ENCODE measurements at regions of chr14 and their contacts with region 1.

Region 1: DNA sequence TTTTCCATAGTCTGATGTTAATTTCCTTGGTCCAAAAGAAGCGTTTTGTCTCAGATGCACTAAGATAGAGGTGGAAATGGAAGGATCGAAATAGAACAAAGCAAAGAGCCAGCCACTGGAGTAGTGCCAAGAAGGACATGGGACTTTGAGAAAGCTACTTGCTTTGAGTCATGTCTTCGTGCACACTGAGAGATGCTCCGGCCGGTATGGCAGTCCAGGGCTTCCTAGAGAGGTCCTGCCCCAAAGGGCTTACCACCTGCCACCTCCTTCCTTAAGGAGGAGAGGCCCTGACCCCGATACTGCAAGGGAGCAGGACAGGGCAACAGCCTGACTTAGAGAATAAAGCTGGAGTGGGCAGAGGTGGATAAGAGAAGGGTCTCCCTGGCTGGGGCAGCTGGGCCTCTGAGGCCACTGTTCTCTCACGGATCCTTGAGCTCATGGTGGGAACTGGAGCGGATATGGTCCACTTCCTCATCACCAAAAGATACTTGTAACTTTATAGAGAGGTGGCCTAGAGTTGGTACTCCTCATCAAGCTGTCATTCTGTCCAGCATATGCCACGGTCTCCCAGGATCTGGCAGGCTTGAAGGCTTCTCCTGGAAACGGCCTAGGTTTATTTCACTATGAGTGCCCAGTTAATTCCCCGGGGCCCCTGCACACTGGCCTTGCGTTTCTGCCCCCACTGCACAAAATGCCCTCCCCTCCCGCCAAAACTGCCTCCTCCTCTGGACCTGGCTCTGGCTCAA is 57.4 kb downstream of the FOXN3 start:
- DNase-seq: no peak
- ATAC-seq: peak; percentile 50
- H3K4me3 ChIP-seq: no peak overlapping the region
- H3K27ac ChIP-seq: peak overlapping the region; percentile 31; the same call in 1 of the 2 replicates
- H3K4me1 ChIP-seq: peaks cover 15% of the 10 kb centered on the region
- H3K27me3 ChIP-seq: no peaks in the 10 kb centered on the region
- CTCF ChIP-seq: no peak
- EP300 ChIP-seq: no peak
- POLR2A ChIP-seq: no peak
- RAD21 ChIP-seq: no peak

Region 2: GRCh38 chr14:89336338-89336737 is 23.3 kb before region 1 on chr14:
- CTCF ChIA-PET with region 1: no interaction called
- POLR2A ChIA-PET with region 1: interaction called, 4 read pairs
- RAD21 ChIA-PET with region 1: interaction called, 7 read pairs
- SMC1A ChIA-PET with region 1: interaction called, 22 read pairs
- in situ Hi-C with region 1: no loop called
- intact Hi-C with region 1: no loop called
- DNase-seq: no peak
- ATAC-seq: peak; percentile 62
- H3K4me3 ChIP-seq: no peak overlapping the region
- H3K27ac ChIP-seq: no peak overlapping the region
- H3K4me1 ChIP-seq: peaks cover 59% of the 10 kb centered on the region
- H3K27me3 ChIP-seq: no peaks in the 10 kb centered on the region
- CTCF ChIP-seq: peak; percentile 8 to 35 (median 21); a peak in 4 of 6 replicates
- EP300 ChIP-seq: no peak
- POLR2A ChIP-seq: no peak
- RAD21 ChIP-seq: peak; percentile 69

Region 3: GRCh38 chr14:89707086-89707485 is 347.4 kb after region 1 on chr14:
- CTCF ChIA-PET with region 1: no interaction called
- POLR2A ChIA-PET with region 1: no interaction called
- RAD21 ChIA-PET with region 1: no interaction called
- SMC1A ChIA-PET with region 1: no interaction called
- in situ Hi-C with region 1: no loop called
- intact Hi-C with region 1: no loop called
- DNase-seq: no peak
- ATAC-seq: no peak
- H3K4me3 ChIP-seq: no peak overlapping the region
- H3K27ac ChIP-seq: no peak overlapping the region
- H3K4me1 ChIP-seq: no peaks in the 10 kb centered on the region; the same call in 1 of the 2 replicates
- H3K27me3 ChIP-seq: no peaks in the 10 kb centered on the region
- CTCF ChIP-seq: no peak
- EP300 ChIP-seq: no peak
- POLR2A ChIP-seq: no peak
- RAD21 ChIP-seq: no peak

Region 4: DNA sequence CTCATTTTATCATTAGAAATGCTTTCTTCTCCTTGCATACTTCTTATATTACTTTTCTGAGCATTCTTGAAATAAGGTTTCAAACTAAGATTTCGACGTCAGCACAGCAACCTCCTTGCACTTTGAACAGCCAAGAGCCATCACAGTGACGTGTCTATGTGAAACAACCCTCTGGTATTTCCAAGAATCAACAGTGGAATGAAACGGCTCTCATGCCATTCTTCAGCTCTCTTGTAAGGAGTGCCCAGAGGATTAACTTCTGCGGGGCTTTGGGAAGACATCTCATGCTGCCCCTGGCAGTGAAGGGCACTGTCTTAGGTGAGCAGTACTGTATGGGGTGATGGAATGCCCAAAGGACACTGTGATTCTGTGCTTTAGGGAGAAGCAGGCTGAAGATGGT is 485.7 kb after region 1 on chr14:
- CTCF ChIA-PET with region 1: no interaction called
- POLR2A ChIA-PET with region 1: no interaction called
- RAD21 ChIA-PET with region 1: no interaction called
- SMC1A ChIA-PET with region 1: no interaction called
- in situ Hi-C with region 1: no loop called
- intact Hi-C with region 1: no loop called
- DNase-seq: no peak
- ATAC-seq: no peak
- H3K4me3 ChIP-seq: no peak overlapping the region
- H3K27ac ChIP-seq: no peak overlapping the region
- H3K4me1 ChIP-seq: no peaks in the 10 kb centered on the region
- H3K27me3 ChIP-seq: no peaks in the 10 kb centered on the region
- CTCF ChIP-seq: no peak
- EP300 ChIP-seq: no peak
- POLR2A ChIP-seq: no peak
- RAD21 ChIP-seq: no peak